Natural killer cell (primary cell): ENCODE measurements at regions of chr5 and their contacts with region 1.

Region 1: GRCh38 chr5:138439477-138440158 is 761 bp downstream of the REEP2 start:
- DNase-seq: no peak
- ATAC-seq: no peak
- H3K4me3 ChIP-seq: peak overlapping the region; percentile 27
- H3K4me3 Mint-ChIP-seq: peak overlapping the region; percentile 70
- H3K27ac ChIP-seq: no peak overlapping the region
- H3K27ac Mint-ChIP-seq: peak overlapping the region in 1 of 2 donors; percentile 80
- H3K4me1 ChIP-seq: peaks cover 15% of the 10 kb centered on the region
- H3K4me1 Mint-ChIP-seq: peaks cover 6 to 33% of the 10 kb centered on the region in 2 donors
- H3K27me3 ChIP-seq: no peaks in the 10 kb centered on the region
- H3K27me3 Mint-ChIP-seq: peaks cover 0 to 5% of the 10 kb centered on the region in 2 donors
- CTCF ChIP-seq: no peak

Region 2: DNA sequence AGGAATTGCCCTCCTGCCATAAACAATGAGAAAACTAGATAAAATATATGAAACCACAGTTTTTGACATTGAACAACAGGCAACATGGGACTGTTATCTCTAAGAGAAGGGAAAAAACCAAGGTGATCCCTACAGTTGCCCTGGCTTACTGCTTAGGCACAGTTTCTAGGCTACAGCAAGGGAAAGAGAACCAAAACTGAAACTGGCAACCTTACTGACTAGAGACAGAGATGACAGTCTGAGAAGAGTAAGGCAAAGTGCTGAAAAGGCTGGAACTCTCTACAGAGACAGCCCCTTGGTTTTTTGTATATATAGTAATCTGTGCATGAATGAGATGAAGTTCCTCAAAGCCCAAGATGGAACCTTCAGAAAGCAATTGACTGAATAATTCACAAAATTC is 37.0 kb before region 1 on chr5:
- intact Hi-C with region 1: loop called (anchors 2 kb)
- DNase-seq: no peak
- ATAC-seq: no peak
- H3K4me3 ChIP-seq: no peak overlapping the region
- H3K4me3 Mint-ChIP-seq: no peak overlapping the region
- H3K27ac ChIP-seq: no peak overlapping the region
- H3K27ac Mint-ChIP-seq: peak overlapping the region in 1 of 2 donors; percentile 24
- H3K4me1 ChIP-seq: no peaks in the 10 kb centered on the region
- H3K4me1 Mint-ChIP-seq: peaks cover 0 to 5% of the 10 kb centered on the region in 2 donors
- H3K27me3 ChIP-seq: no peaks in the 10 kb centered on the region
- H3K27me3 Mint-ChIP-seq: no peaks in the 10 kb centered on the region
- CTCF ChIP-seq: no peak

Region 3: DNA sequence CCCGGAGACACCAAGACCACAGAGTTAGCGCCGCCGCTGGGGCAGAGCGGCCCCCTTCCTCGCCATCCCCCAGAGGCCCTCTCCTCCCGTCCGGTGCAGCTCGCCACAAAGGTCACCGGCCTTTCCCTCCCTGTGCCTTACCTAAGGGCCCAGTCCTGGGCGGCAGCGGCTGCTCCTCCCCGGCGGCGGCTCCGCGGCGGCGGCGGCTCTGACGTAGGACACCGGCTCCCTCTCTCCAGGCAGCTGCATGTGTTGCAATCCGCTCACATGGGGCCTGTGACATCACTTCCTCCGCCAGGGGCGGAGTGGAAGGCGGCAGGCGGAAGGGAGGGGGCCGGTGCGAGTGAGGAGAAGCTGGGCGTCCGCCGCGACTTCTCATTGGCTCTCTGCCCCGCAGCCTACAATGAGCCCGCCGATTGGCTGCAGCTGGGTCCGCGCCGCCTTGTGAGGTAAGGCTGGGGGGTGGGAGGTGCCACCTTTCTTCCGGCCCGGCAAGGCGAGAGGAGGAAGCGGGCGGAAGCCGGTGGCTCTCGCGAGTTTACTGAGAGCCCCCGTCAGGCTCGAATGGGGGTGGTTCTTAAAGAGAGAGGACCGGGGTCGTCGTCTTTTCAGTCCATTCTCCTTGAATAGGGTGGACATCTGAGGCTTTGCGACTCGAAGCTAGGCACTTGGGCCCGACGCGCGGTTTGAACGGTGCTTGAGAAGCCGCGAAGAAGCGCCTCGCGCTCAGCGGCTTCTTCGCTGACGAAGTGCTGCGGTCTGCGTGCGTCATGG is 103.5 kb after region 1 on chr5 and contains the start of gene ETF1:
- intact Hi-C with region 1: no loop called
- DNase-seq: peak; percentile 99 to 100
- ATAC-seq: peak; percentile 86 to 97 (median 87)
- H3K4me3 ChIP-seq: peak within 1 kb of the TSS; percentile 98
- H3K4me3 Mint-ChIP-seq: peak within 1 kb of the TSS; percentile 100
- H3K27ac ChIP-seq: peak within 1 kb of the TSS; percentile 98
- H3K27ac Mint-ChIP-seq: peak within 1 kb of the TSS; percentile 98 to 100
- H3K4me1 ChIP-seq: peaks cover 32% of the 10 kb centered on the region
- H3K4me1 Mint-ChIP-seq: peaks cover 71 to 72% of the 10 kb centered on the region in 2 donors
- H3K27me3 ChIP-seq: no peaks in the 10 kb centered on the region
- H3K27me3 Mint-ChIP-seq: no peaks in the 10 kb centered on the region
- CTCF ChIP-seq: no peak
- total RNA-seq, gene ETF1: 135 to 189 (median 136) TPM

Region 4: GRCh38 chr5:138748630-138749081 is 309.0 kb after region 1 on chr5:
- intact Hi-C with region 1: no loop called
- DNase-seq: no peak
- ATAC-seq: no peak
- H3K4me3 ChIP-seq: no peak overlapping the region
- H3K4me3 Mint-ChIP-seq: no peak overlapping the region
- H3K27ac ChIP-seq: no peak overlapping the region
- H3K27ac Mint-ChIP-seq: no peak overlapping the region
- H3K4me1 ChIP-seq: peaks cover 8% of the 10 kb centered on the region
- H3K4me1 Mint-ChIP-seq: peaks cover 0 to 9% of the 10 kb centered on the region in 2 donors
- H3K27me3 ChIP-seq: no peaks in the 10 kb centered on the region
- H3K27me3 Mint-ChIP-seq: no peaks in the 10 kb centered on the region
- CTCF ChIP-seq: no peak